Heart left ventricle (tissue), 16 donors: ENCODE measurements at regions of chr15 and their contacts with region 1.

Region 1: GRCh38 chr15:49135893-49136292 is 19.5 kb downstream of the COPS2 start:
- DNase-seq: no peak
- ATAC-seq: no peak
- H3K4me3 ChIP-seq: no peak overlapping the region
- H3K27ac ChIP-seq: no peak overlapping the region
- H3K4me1 ChIP-seq: no peaks in the 10 kb centered on the region
- H3K27me3 ChIP-seq: no peaks in the 10 kb centered on the region
- CTCF ChIP-seq: no peak
- POLR2A ChIP-seq: no peak

Region 2: GRCh38 chr15:49015896-49016295 is 120.0 kb before region 1 on chr15:
- intact Hi-C with region 1: loop called in 3 of 10 experiments (anchors 5 to 10 kb)
- DNase-seq: no peak
- ATAC-seq: no peak
- H3K4me3 ChIP-seq: no peak overlapping the region
- H3K27ac ChIP-seq: no peak overlapping the region
- H3K4me1 ChIP-seq: peaks cover 0 to 2% (median 0%) of the 10 kb centered on the region in 12 donors
- H3K27me3 ChIP-seq: no peaks in the 10 kb centered on the region
- CTCF ChIP-seq: no peak
- POLR2A ChIP-seq: no peak

Region 3: DNA sequence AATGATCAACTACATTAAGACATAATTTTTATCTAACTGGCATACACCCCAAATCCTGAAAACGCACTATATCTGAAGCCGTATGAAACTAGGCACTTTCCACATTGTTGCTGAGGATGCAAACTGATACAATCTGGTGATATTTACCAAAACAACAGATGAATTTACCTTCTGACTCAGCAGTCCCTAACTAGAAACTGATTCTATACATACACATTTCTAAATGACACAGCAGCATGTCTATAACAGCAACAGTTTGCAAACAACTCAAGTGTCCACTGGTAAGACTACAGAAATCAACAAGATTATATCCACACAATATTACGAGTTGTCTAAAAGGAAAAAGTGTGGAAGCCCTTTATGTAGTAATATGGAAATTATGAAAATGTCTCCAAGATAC is 112.5 kb before region 1 on chr15:
- intact Hi-C with region 1: loop called in 2 of 10 experiments (anchors 10 kb)
- DNase-seq: no peak
- ATAC-seq: no peak
- H3K4me3 ChIP-seq: no peak overlapping the region
- H3K27ac ChIP-seq: no peak overlapping the region
- H3K4me1 ChIP-seq: no peaks in the 10 kb centered on the region
- H3K27me3 ChIP-seq: no peaks in the 10 kb centered on the region
- CTCF ChIP-seq: no peak
- POLR2A ChIP-seq: no peak

Region 4: DNA sequence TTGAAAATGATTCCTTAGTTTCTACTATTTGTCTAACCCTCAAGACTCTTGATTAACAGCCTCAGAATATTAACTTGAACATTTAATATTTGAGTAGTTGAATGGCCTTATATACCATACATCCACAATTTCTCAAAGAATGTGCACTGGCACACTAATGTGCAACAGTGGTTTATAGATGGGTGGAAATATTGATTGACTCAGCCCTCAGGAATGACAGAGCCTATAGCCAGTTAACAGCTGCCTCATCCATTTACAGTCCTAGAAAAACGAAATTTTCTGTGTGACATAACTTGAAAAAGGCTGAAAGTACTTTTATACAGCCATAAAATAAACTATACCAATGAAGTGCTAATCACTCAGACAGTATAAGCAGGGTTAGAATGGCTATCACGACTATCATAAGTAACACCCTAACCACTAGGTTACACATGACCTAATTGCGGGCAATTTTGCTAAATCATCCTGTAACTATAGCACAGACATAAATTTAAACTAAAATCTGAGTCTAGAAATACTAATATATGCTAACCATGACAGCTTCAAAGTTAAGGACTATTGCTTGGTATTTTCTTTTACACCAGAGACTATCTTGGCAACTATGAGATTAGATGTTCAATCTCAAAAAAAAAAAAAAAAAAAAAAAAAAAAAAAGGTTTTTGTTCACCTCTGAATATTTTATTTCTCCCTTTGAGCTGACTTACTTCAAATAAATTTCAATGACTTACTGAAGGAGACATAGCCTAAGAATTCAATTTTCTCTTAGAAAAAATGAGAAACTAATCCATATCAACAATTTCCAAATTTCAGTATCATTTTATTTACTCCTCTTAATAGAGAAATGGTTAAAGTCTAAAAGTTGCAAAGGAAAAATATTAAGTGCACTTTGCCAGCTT is 99.0 kb before region 1 on chr15:
- intact Hi-C with region 1: loop called in 2 of 10 experiments (anchors 5 to 10 kb)
- DNase-seq: no peak
- ATAC-seq: no peak
- H3K4me3 ChIP-seq: no peak overlapping the region
- H3K27ac ChIP-seq: peak overlapping the region in 1 of 12 donors; percentile 6
- H3K4me1 ChIP-seq: peaks cover 0 to 50% (median 34%) of the 10 kb centered on the region in 12 donors
- H3K27me3 ChIP-seq: no peaks in the 10 kb centered on the region
- CTCF ChIP-seq: no peak
- POLR2A ChIP-seq: no peak

Region 5: GRCh38 chr15:49215768-49216739 is 80.2 kb after region 1 on chr15:
- intact Hi-C with region 1: no loop called
- DNase-seq: peak; percentile 35 to 84 (median 65)
- ATAC-seq: peak; percentile 78 to 99 (median 96)
- H3K4me3 ChIP-seq: no peak overlapping the region
- H3K27ac ChIP-seq: peak overlapping the region in 1 of 12 donors; percentile 35
- H3K4me1 ChIP-seq: peaks cover 0 to 10% (median 0%) of the 10 kb centered on the region in 12 donors
- H3K27me3 ChIP-seq: no peaks in the 10 kb centered on the region
- CTCF ChIP-seq: peak in 7 of 12 donors; percentile 17 to 58 (median 38)
- POLR2A ChIP-seq: no peak